Naive thymus-derived CD4-positive, alpha-beta T cell (primary cell): ENCODE measurements at regions of chr13 and their contacts with region 1.

Region 1: DNA sequence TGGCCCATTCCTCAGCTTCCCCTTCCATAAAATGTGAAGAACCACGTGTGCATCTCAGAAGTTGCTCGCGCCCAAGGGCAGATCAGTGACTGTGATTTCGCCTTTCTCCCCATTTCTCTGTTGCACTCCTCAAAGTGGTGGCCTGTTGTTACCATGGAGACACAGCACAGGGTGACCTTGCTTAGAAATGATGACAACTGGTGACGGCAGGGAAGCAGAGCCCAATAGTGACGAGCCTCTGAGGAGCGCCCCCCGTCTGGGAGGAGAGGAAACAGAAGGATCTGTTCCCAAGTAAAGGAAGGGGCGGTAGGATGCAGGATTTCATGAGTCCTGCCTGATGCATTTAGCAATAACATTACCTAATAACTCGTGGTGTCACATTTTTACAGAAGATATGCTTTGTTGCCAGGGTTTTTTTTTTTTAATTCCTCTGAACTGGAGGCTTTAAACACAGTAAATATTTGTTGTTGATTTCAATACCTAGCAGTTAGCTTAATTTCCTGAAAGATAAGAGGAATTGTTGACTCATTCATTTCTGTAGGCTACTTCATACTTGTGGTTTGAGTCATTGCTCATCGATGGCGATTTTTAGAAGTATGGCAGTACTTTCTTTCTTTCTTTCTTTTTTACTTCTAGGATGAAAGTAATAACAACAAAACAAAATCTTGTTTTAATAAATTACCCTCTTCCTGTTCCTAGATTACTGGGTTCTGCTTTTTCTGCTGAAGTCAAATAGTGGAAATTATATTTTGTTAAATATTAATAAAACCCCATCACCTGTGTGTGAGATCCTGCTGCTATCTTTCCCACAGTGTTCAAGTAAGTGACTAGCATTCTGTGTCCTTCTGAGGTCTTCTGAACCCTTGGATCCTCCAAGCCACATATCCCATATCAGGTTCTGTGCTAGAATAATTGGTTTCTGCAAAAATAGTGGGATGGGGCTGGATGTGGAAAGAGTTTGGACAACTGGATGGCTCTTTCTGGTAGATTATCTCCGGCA is 36.0 kb downstream of the MBNL2 start:
- DNase-seq: no peak
- ATAC-seq: peak; percentile 43
- H3K4me3 ChIP-seq: no peak overlapping the region
- H3K4me3 Mint-ChIP-seq: peak overlapping the region in 2 of 10 donors; percentile 31 to 57
- H3K27ac ChIP-seq: no peak overlapping the region
- H3K27ac Mint-ChIP-seq: peak overlapping the region in 2 of 9 donors; percentile 43 to 86
- H3K4me1 ChIP-seq: peaks cover 0 to 25% of the 10 kb centered on the region in 2 donors
- H3K4me1 Mint-ChIP-seq: peaks cover 48 to 72% (median 67%) of the 10 kb centered on the region in 7 donors
- H3K27me3 ChIP-seq: no peaks in the 10 kb centered on the region
- H3K27me3 Mint-ChIP-seq: no peaks in the 10 kb centered on the region

Region 2: GRCh38 chr13:97273341-97273831 is 15.3 kb after region 1 on chr13:
- CTCF ChIA-PET with region 1: no interaction called
- POLR2A ChIA-PET with region 1: no interaction called
- intact Hi-C with region 1: loop called in 1 of 2 experiments (anchors 1 kb)
- DNase-seq: no peak
- ATAC-seq: no peak
- H3K4me3 ChIP-seq: no peak overlapping the region
- H3K4me3 Mint-ChIP-seq: peak overlapping the region in 1 of 10 donors; percentile 20
- H3K27ac ChIP-seq: no peak overlapping the region
- H3K27ac Mint-ChIP-seq: no peak overlapping the region
- H3K4me1 ChIP-seq: no peaks in the 10 kb centered on the region
- H3K4me1 Mint-ChIP-seq: peaks cover 5 to 69% (median 44%) of the 10 kb centered on the region in 7 donors
- H3K27me3 ChIP-seq: no peaks in the 10 kb centered on the region
- H3K27me3 Mint-ChIP-seq: no peaks in the 10 kb centered on the region

Region 3: GRCh38 chr13:97289514-97290298 is 31.6 kb after region 1 on chr13:
- CTCF ChIA-PET with region 1: no interaction called
- POLR2A ChIA-PET with region 1: no interaction called
- intact Hi-C with region 1: loop called in 1 of 2 experiments (anchors 5 kb)
- DNase-seq: no peak
- ATAC-seq: no peak
- H3K4me3 ChIP-seq: no peak overlapping the region
- H3K4me3 Mint-ChIP-seq: no peak overlapping the region
- H3K27ac ChIP-seq: no peak overlapping the region
- H3K27ac Mint-ChIP-seq: no peak overlapping the region
- H3K4me1 ChIP-seq: no peaks in the 10 kb centered on the region
- H3K4me1 Mint-ChIP-seq: peaks cover 12 to 36% (median 23%) of the 10 kb centered on the region in 7 donors
- H3K27me3 ChIP-seq: no peaks in the 10 kb centered on the region
- H3K27me3 Mint-ChIP-seq: no peaks in the 10 kb centered on the region